ENCODE measurements at regions of chr18 and their contacts with region 1.

Region 1: GRCh38 chr18:12934454-12935071 is 13.2 kb upstream of the SEH1L start:
- DNase-seq: peak; percentile 79
- H3K4me3 ChIP-seq: no peak overlapping the region
- H3K27ac ChIP-seq: no peak overlapping the region
- H3K4me1 ChIP-seq: no peaks in the 10 kb centered on the region
- H3K27me3 ChIP-seq: no peaks in the 10 kb centered on the region
- CTCF ChIP-seq: peak; percentile 90

Region 2: DNA sequence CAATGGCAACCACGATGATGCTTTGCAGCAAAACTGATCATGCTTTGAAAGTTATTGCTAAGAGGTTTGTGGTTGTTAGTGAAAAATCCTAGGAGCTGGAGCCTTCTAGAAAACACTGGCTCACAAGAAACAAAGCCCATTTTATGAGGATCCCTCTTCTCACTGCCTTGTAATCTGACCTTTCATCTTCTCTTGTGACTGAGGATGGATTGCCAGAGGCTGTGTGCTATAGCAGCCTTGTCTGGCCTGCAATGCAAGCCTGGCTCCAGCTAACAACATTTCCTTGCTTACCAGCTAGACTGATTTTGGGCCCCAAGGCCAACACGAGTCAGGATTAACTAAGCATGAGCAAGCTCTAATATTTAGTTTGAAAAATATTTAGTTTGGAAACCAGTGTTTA is 1798.3 kb before region 1 on chr18:
- intact Hi-C with region 1: no loop called
- DNase-seq: no peak
- H3K4me3 ChIP-seq: no peak overlapping the region
- H3K27ac ChIP-seq: no peak overlapping the region
- H3K4me1 ChIP-seq: no peaks in the 10 kb centered on the region
- H3K27me3 ChIP-seq: peaks cover 39% of the 10 kb centered on the region
- CTCF ChIP-seq: no peak

Region 3: DNA sequence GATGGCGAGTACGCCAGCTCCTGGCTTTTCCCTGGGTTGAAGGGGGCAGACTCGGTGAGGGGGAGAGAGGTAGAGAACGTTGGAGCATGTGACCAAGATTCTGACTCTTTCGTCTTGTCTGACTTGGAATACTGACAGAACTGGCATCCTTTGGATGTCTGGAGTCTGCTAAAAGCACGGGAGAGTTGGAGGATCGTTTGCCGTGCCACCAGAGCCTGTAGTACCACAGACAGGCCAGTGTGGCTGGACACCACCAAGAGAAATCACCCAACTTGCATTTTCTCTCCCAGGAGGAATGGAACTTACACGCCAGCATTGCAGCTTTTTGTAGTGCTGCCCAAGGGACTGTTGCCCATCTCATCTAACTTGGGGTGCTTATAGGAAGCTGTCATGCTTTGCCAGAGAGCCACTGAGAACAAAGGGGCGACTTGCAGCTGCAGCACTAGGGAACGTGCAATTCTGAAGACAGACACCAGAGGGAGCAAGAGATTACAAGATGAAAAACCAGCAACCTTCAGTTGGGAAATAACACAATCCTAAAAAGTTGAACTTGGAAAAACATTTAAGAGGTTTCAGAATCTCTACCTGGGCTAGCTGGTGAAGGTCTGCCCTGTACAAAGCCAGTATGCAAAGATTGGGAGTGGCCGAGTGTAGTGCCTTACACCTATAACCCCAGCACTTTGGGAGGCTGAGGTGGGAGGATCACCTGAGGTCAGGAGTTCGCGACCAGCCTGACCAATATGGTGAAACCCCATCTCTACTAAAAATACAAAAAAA is 207.6 kb before region 1 on chr18:
- intact Hi-C with region 1: loop called (anchors 5 kb)
- DNase-seq: no peak
- H3K4me3 ChIP-seq: no peak overlapping the region
- H3K27ac ChIP-seq: no peak overlapping the region
- H3K4me1 ChIP-seq: no peaks in the 10 kb centered on the region
- H3K27me3 ChIP-seq: no peaks in the 10 kb centered on the region
- CTCF ChIP-seq: peak; percentile 93

Region 4: GRCh38 chr18:12883684-12884405 is 50.7 kb before region 1 on chr18 and contains the start of gene PTPN2:
- intact Hi-C with region 1: loop called (anchors 10 kb)
- DNase-seq: peak; percentile 94
- H3K4me3 ChIP-seq: peak within 1 kb of the TSS; percentile 88
- H3K27ac ChIP-seq: peak within 1 kb of the TSS; percentile 100
- H3K4me1 ChIP-seq: peaks cover 49% of the 10 kb centered on the region
- H3K27me3 ChIP-seq: no peaks in the 10 kb centered on the region
- CTCF ChIP-seq: no peak
- total RNA-seq, gene PTPN2: 11.0 TPM